ENCODE measurements at regions of chr1 and their contacts with region 1.

Region 1: GRCh38 chr1:93120614-93121013 is 41.5 kb downstream of the MTF2 start:
- DNase-seq: no peak
- ATAC-seq: no peak
- H3K4me3 Mint-ChIP-seq: no peak overlapping the region
- H3K27ac Mint-ChIP-seq: no peak overlapping the region
- H3K4me1 Mint-ChIP-seq: peaks cover 8% of the 10 kb centered on the region
- H3K27me3 Mint-ChIP-seq: no peaks in the 10 kb centered on the region

Region 2: DNA sequence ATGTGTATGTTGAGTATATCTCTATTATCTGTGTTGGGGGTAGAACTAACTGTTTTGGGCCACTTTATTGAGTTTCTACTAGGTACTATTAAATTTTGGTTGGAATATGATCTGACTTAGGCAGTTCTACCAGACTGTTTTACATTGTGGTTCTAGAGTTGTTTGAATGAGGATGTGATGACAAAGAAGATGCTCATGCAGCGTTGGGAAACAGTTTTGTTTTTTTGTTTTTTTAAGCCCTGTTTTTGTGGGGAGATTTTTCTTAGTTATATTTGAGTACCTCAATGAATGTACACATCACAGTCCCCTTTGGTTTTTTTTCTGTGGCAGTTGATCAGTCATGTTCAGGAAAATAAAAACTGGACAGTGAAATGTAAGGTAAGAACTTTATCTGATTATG is 19.5 kb after region 1 on chr1:
- CTCF ChIA-PET with region 1: no interaction called
- POLR2A ChIA-PET with region 1: no interaction called
- intact Hi-C with region 1: loop called in 1 of 2 experiments (anchors 2 kb)
- DNase-seq: no peak
- ATAC-seq: no peak
- H3K4me3 Mint-ChIP-seq: no peak overlapping the region
- H3K27ac Mint-ChIP-seq: peak overlapping the region; percentile 21
- H3K4me1 Mint-ChIP-seq: no peaks in the 10 kb centered on the region
- H3K27me3 Mint-ChIP-seq: no peaks in the 10 kb centered on the region

Measured in activated CD4-positive, alpha-beta T cell treated with anti-CD3 and anti-CD28 coated beads for 36 hours (primary cell).